ENCODE measurements at regions of chr15 and their contacts with region 1.

Region 1: DNA sequence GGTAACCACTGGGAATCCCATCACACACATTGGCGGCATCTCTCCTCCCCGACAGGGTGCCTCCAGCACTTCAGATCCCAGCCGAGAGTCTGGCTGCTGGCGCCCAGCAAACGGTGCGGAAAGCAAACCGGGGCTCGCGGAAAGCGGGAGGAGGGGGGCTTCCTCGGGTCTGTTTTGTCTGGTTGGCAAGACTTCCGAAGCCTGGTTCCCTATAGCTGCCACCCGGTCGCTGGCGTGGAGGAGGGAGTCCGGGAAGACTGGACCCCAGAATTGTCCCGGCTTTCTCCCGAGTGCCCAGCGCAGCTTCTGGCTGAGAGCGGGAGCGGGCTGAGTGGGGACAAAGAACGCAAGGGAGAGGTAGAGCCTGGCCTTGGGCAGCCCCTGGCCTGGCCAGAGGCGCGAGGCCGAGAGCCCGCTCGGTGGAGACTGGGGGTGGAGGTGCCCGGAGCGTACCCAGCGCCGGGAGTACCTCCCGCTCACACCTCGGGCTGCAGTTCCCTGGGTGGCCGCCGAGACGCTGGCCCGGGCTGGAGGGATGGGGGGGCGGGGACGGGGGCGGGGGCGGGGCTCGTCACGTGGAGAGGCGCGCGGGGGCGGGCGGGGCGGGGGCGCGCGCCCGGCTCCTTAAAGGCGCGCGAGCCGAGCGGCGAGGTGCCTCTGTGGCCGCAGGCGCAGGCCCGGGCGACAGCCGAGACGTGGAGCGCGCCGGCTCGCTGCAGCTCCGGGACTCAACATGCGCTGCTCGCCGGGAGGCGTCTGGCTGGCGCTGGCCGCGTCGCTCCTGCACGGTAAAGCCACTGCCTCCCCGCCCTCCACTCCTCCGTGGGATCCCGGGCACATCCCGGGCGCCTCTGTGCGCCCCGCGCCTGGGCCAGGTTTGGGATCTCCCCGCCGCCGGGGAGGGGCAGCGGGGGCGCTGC is at the start of gene CHRNA7:
- DNase-seq: peak; percentile 77
- ATAC-seq: peak; percentile 83
- H3K4me3 Mint-ChIP-seq: peak within 1 kb of the TSS; percentile 82
- H3K27ac Mint-ChIP-seq: no peak within 1 kb of the TSS
- H3K4me1 Mint-ChIP-seq: peaks cover 17% of the 10 kb centered on the region
- H3K27me3 Mint-ChIP-seq: peaks cover 30% of the 10 kb centered on the region
- CTCF ChIP-seq: no peak
- total RNA-seq, gene CHRNA7: 5.6 to 7.8 TPM (median 7.3 TPM) in 3 replicates

Region 2: GRCh38 chr15:31840849-31841476 is 189.2 kb before region 1 on chr15:
- CTCF ChIA-PET with region 1: no interaction called
- POLR2A ChIA-PET with region 1: no interaction called
- DNase-seq: no peak
- ATAC-seq: no peak
- H3K4me3 Mint-ChIP-seq: no peak overlapping the region
- H3K27ac Mint-ChIP-seq: no peak overlapping the region
- H3K4me1 Mint-ChIP-seq: no peaks in the 10 kb centered on the region
- H3K27me3 Mint-ChIP-seq: no peaks in the 10 kb centered on the region
- CTCF ChIP-seq: no peak

Region 3: GRCh38 chr15:31977812-31978661 is 52.1 kb before region 1 on chr15:
- CTCF ChIA-PET with region 1: interaction called, 168 read pairs
- POLR2A ChIA-PET with region 1: no interaction called
- DNase-seq: peak; percentile 88
- ATAC-seq: peak; percentile 79
- H3K4me3 Mint-ChIP-seq: peak overlapping the region; percentile 23
- H3K27ac Mint-ChIP-seq: no peak overlapping the region
- H3K4me1 Mint-ChIP-seq: peaks cover 27% of the 10 kb centered on the region
- H3K27me3 Mint-ChIP-seq: peaks cover 15% of the 10 kb centered on the region
- CTCF ChIP-seq: peak; percentile 89

Region 4: GRCh38 chr15:31993062-31993461 is 37.1 kb before region 1 on chr15:
- CTCF ChIA-PET with region 1: interaction called, 10 read pairs
- POLR2A ChIA-PET with region 1: no interaction called
- DNase-seq: no peak
- ATAC-seq: no peak
- H3K4me3 Mint-ChIP-seq: no peak overlapping the region
- H3K27ac Mint-ChIP-seq: no peak overlapping the region
- H3K4me1 Mint-ChIP-seq: no peaks in the 10 kb centered on the region
- H3K27me3 Mint-ChIP-seq: no peaks in the 10 kb centered on the region
- CTCF ChIP-seq: no peak

Region 5: DNA sequence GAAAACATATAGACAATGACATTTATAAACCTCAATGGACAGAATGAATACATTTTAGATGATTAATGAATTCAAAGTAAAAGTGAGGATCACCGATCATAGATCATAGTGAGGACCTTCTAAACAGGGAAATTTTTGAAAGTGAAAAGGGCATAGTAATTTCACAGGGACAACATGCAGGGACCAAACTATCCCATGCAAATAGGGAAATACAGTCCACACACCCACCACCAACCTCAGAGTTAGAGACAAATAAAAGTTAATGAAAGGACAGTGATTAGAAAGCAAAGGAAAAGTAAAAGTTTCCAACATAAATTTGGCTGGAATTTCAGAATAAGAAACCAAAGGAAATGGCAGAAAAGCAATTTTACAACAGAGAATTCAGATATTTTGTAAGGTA is 15.2 kb before region 1 on chr15:
- CTCF ChIA-PET with region 1: interaction called, 13 read pairs
- POLR2A ChIA-PET with region 1: no interaction called
- DNase-seq: no peak
- ATAC-seq: no peak
- H3K4me3 Mint-ChIP-seq: no peak overlapping the region
- H3K27ac Mint-ChIP-seq: no peak overlapping the region
- H3K4me1 Mint-ChIP-seq: no peaks in the 10 kb centered on the region
- H3K27me3 Mint-ChIP-seq: no peaks in the 10 kb centered on the region
- CTCF ChIP-seq: no peak

Region 6: GRCh38 chr15:32053719-32054118 is 23.6 kb after region 1 on chr15:
- CTCF ChIA-PET with region 1: interaction called, 10 read pairs
- POLR2A ChIA-PET with region 1: no interaction called
- DNase-seq: no peak
- ATAC-seq: peak; percentile 55; the same call in 1 of the 2 replicates
- H3K4me3 Mint-ChIP-seq: no peak overlapping the region
- H3K27ac Mint-ChIP-seq: no peak overlapping the region
- H3K4me1 Mint-ChIP-seq: peaks cover 20% of the 10 kb centered on the region
- H3K27me3 Mint-ChIP-seq: 0 out of 2 replicates have a peak, but pooled peaks cover 4% of the 10 kb centered on the region
- CTCF ChIP-seq: no peak

Region 7: GRCh38 chr15:32106401-32107381 is 76.6 kb after region 1 on chr15:
- CTCF ChIA-PET with region 1: interaction called, 11 read pairs
- POLR2A ChIA-PET with region 1: no interaction called
- DNase-seq: no peak
- ATAC-seq: no peak
- H3K4me3 Mint-ChIP-seq: no peak overlapping the region
- H3K27ac Mint-ChIP-seq: no peak overlapping the region
- H3K4me1 Mint-ChIP-seq: peaks cover 33% of the 10 kb centered on the region
- H3K27me3 Mint-ChIP-seq: no peaks in the 10 kb centered on the region
- CTCF ChIP-seq: no peak

Region 8: GRCh38 chr15:32148833-32149555 is 118.9 kb after region 1 on chr15:
- CTCF ChIA-PET with region 1: interaction called, 16 read pairs
- POLR2A ChIA-PET with region 1: no interaction called
- DNase-seq: no peak
- ATAC-seq: no peak
- H3K4me3 Mint-ChIP-seq: no peak overlapping the region
- H3K27ac Mint-ChIP-seq: no peak overlapping the region
- H3K4me1 Mint-ChIP-seq: peaks cover 28% of the 10 kb centered on the region
- H3K27me3 Mint-ChIP-seq: no peaks in the 10 kb centered on the region
- CTCF ChIP-seq: no peak

Measured in WTC11 (cell line).